Breast epithelium (tissue), 4 donors: ENCODE measurements at regions of chr17 and their contacts with region 1.

Region 1: DNA sequence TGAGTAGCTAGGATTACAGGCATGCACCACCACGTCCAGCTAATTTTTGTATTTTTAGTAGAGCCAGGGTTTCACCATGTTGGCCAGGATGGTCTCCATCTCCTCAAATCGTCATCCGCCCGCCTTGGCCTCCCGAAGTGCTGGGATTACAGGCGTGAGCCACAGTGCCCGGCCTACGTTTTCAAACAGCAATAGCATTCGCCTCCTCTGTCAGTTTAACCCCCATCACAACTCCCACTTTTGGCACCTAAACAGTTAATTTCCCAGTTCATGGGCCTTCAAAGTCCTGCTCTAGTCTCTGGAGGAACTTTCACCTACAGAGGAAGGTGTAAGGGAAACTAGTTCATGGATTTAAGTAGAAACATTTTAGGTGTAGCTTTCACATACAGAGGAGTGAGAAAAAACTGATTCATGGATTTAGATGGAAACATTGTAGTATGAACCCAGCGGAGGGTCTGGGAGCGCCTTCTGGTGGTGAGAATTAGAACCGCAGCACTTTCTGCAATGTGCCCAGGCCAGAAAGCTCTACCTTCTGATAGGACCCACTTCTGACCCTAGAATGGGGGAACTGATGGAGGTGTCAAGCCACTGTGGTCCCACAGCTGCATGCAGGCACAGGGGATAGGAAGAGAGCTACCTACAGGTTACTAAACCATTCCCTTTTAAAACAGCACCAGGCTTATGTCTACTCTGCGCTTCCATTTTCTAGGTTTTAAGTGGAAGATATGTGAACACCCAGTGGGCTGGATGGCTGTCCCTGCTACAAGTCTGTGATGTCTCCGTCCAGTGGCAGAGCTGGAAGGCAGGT is 12.0 kb upstream of the MEOX1 start:
- DNase-seq: peak; percentile 46 to 74
- H3K4me3 ChIP-seq: no peak overlapping the region
- H3K27ac ChIP-seq: no peak overlapping the region
- H3K4me1 ChIP-seq: peaks cover 0 to 7% of the 10 kb centered on the region in 2 donors
- H3K27me3 ChIP-seq: no peaks in the 10 kb centered on the region
- CTCF ChIP-seq: peak; percentile 91 to 92 (median 92)
- POLR2A ChIP-seq: no peak

Region 2: GRCh38 chr17:43576563-43577229 is 97.0 kb before region 1 on chr17:
- intact Hi-C with region 1: loop called (anchors 1 kb)
- DNase-seq: peak; percentile 48 to 59
- H3K4me3 ChIP-seq: no peak overlapping the region
- H3K27ac ChIP-seq: no peak overlapping the region
- H3K4me1 ChIP-seq: peaks cover 0 to 4% of the 10 kb centered on the region in 2 donors
- H3K27me3 ChIP-seq: no peaks in the 10 kb centered on the region
- CTCF ChIP-seq: peak; percentile 72 to 94 (median 88)
- POLR2A ChIP-seq: no peak